ENCODE measurements at regions of chr21 and their contacts with region 1.

Region 1: GRCh38 chr21:44801468-44802395 is at the start of gene UBE2G2:
- DNase-seq: peak; percentile 53 to 93 (median 72)
- H3K4me3 ChIP-seq: peak within 1 kb of the TSS; percentile 65 to 100 (median 92)
- H3K27ac ChIP-seq: peak within 1 kb of the TSS in 37 of 59 donors; percentile 1 to 84 (median 59)
- H3K27me3 ChIP-seq: no peaks in the 10 kb centered on the region
- CTCF ChIP-seq: peak in 19 of 56 donors; percentile 2 to 49 (median 17)
- total RNA-seq, gene UBE2G2: 62.2 to 111 (median 84.5) TPM

Region 2: DNA sequence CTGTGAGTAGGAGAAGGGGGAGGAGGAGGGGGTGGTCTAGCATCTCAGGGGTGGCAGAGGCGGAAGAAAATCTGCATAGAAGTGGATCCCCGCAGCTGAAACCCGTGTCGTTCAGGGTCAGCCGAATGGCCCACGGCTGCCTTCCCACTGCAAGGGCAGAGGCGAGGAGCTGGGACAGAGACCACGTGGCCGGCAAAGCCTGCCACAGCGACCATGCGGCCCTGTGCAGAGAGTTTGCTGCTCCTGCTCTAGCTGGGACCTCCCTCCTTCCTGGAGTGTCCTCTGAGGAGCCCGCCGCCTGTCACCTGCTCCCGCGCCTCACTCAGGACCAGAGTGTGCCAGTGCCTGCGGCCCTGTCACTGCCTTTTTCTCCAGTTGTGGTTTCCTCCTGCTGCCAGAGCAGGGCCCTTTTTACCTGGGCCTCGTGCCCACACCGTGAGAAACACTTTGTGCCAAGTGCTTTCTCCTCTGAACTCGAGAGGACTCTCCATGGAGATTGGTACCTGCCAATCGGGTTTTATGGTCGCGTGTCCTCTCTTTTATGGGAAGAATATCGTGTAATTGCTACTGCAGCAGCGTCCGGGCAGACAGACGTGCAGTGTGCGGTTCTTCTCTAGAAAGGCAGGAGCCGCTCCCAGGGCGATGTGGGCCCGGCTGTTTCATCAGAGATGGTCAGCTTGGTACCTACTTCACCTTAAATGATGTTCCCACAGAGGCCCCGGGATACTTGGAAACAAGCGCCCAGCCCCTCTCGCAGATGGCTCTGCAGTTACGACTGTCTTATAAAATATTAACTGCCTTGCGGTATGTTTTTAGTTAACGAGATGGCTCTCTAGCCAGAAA is 453.6 kb before region 1 on chr21:
- intact Hi-C with region 1: loop called in 1 of 2 experiments (anchors 5 kb)
- DNase-seq: no peak
- H3K4me3 ChIP-seq: no peak overlapping the region
- H3K27ac ChIP-seq: no peak overlapping the region
- H3K27me3 ChIP-seq: peaks cover 0 to 35% (median 9%) of the 10 kb centered on the region in 45 donors
- CTCF ChIP-seq: no peak

Region 3: GRCh38 chr21:44378646-44379514 is 422.9 kb before region 1 on chr21:
- intact Hi-C with region 1: no loop called
- DNase-seq: peak in 3 of 10 donors; percentile 21 to 29 (median 29)
- H3K4me3 ChIP-seq: no peak overlapping the region
- H3K27ac ChIP-seq: no peak overlapping the region
- H3K27me3 ChIP-seq: no peaks in the 10 kb centered on the region
- CTCF ChIP-seq: no peak

Region 4: GRCh38 chr21:44939532-44940115 is 137.9 kb after region 1 on chr21 and contains the start of gene SLX9:
- intact Hi-C with region 1: loop called (anchors 5 to 10 kb)
- DNase-seq: peak in 9 of 10 donors; percentile 51 to 87 (median 67)
- H3K4me3 ChIP-seq: peak within 1 kb of the TSS; percentile 62 to 99 (median 89)
- H3K27ac ChIP-seq: peak within 1 kb of the TSS in 42 of 59 donors; percentile 1 to 90 (median 56)
- H3K27me3 ChIP-seq: no peaks in the 10 kb centered on the region
- CTCF ChIP-seq: peak in 33 of 56 donors; percentile 6 to 57 (median 23)
- total RNA-seq, gene SLX9: 13.4 to 35.4 (median 23.4) TPM

Region 5: GRCh38 chr21:45074048-45074817 is 272.5 kb after region 1 on chr21 and contains the start of gene ADARB1:
- intact Hi-C with region 1: loop called in 1 of 2 experiments (anchors 10 kb)
- DNase-seq: peak in 5 of 10 donors; percentile 29 to 83 (median 70)
- H3K4me3 ChIP-seq: peak within 1 kb of the TSS; percentile 71 to 98 (median 84)
- H3K27ac ChIP-seq: peak within 1 kb of the TSS in 55 of 59 donors; percentile 15 to 96 (median 87)
- H3K27me3 ChIP-seq: no peaks in the 10 kb centered on the region
- CTCF ChIP-seq: peak in 1 of 56 donors; percentile 13
- total RNA-seq, gene ADARB1: 22.6 to 83.5 (median 57.4) TPM